ENCODE measurements at regions of chr2 and their contacts with region 1.

Region 1: GRCh38 chr2:197499594-197500526 is at the starts of genes HSPD1 and HSPE1:
- DNase-seq: peak; percentile 100
- H3K4me3 Mint-ChIP-seq: peak within 1 kb of the TSS; percentile 89
- H3K27ac Mint-ChIP-seq: peak within 1 kb of the TSS; percentile 93
- H3K4me1 Mint-ChIP-seq: peaks cover 18% of the 10 kb centered on the region
- H3K27me3 Mint-ChIP-seq: no peaks in the 10 kb centered on the region
- CTCF ChIP-seq: no peak
- total RNA-seq, gene HSPD1: 681 and 693 TPM in 2 replicates
- total RNA-seq, gene HSPE1: 80.0 and 95.2 TPM in 2 replicates

Region 2: GRCh38 chr2:197124639-197125390 is 375.0 kb before region 1 on chr2:
- CTCF ChIA-PET with region 1: no interaction called
- POLR2A ChIA-PET with region 1: no interaction called
- intact Hi-C with region 1: no loop called
- DNase-seq: no peak
- H3K4me3 Mint-ChIP-seq: no peak overlapping the region
- H3K27ac Mint-ChIP-seq: no peak overlapping the region
- H3K4me1 Mint-ChIP-seq: no peaks in the 10 kb centered on the region
- H3K27me3 Mint-ChIP-seq: no peaks in the 10 kb centered on the region
- CTCF ChIP-seq: no peak

Region 3: GRCh38 chr2:197378494-197379307 is 121.2 kb before region 1 on chr2:
- CTCF ChIA-PET with region 1: no interaction called
- POLR2A ChIA-PET with region 1: no interaction called
- intact Hi-C with region 1: no loop called
- DNase-seq: peak; percentile 74
- H3K4me3 Mint-ChIP-seq: peak overlapping the region; percentile 19
- H3K27ac Mint-ChIP-seq: no peak overlapping the region
- H3K4me1 Mint-ChIP-seq: peaks cover 16% of the 10 kb centered on the region
- H3K27me3 Mint-ChIP-seq: peaks cover 12% of the 10 kb centered on the region
- CTCF ChIP-seq: peak; percentile 70

Region 4: DNA sequence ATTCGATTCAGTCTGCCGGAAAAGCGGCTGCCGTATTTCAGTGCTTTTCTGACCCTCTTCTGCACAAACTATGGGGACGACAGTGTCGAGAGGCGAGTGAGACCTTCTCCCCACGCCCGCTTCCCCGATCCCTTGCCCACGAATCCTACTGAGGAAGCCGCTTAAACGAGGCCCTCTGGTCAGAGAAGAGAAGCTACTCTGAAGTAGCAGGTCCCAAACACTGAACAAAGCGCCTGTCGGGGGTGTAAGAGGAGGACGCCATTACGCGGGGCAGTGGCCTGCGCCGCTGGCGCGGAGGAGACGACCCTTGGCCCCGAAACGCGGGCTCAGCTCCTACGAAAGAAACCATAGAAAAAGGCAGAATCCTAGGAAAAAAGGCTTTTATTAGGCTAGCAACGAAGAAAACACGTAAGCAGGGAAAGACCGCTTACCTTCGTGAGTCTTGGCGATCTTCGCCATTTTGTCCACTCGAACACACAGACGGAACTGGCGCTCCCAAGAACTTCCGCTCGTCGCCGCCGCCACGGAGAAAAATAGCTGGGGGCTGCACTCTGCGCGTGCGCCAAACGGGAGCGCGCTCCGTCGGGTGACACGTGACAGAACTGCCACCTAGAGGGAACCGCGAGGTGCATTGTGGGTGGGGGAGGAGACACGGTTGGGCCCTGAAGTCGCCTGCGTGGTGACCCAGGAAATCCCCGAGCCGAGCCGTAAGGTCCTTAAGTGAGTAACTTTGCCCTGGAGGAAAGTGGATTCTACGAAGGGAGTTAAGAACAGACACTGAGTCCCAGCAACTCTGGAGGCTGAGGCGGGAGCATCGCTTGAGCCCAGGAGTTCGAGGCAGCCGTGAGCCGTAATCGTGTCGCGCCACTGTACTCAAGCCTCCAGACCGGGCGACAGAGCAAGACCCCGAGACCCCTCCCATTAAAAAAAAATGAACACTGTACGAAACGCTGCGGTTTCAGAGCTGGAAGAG is 65.0 kb before region 1 on chr2 and contains the start of gene SF3B1:
- CTCF ChIA-PET with region 1: interaction called, 3 read pairs
- POLR2A ChIA-PET with region 1: interaction called, 132 read pairs
- intact Hi-C with region 1: loop called (anchors 2 kb)
- DNase-seq: peak; percentile 98
- H3K4me3 Mint-ChIP-seq: peak within 1 kb of the TSS; percentile 70
- H3K27ac Mint-ChIP-seq: peak within 1 kb of the TSS; percentile 100
- H3K4me1 Mint-ChIP-seq: peaks cover 15% of the 10 kb centered on the region
- H3K27me3 Mint-ChIP-seq: no peaks in the 10 kb centered on the region
- CTCF ChIP-seq: no peak
- total RNA-seq, gene SF3B1: 179 and 182 TPM in 2 replicates

Region 5: GRCh38 chr2:197461057-197461456 is 38.8 kb before region 1 on chr2:
- CTCF ChIA-PET with region 1: no interaction called
- POLR2A ChIA-PET with region 1: interaction called, 135 read pairs
- intact Hi-C with region 1: no loop called
- DNase-seq: peak; percentile 39
- H3K4me3 Mint-ChIP-seq: no peak overlapping the region
- H3K27ac Mint-ChIP-seq: peak overlapping the region; percentile 59
- H3K4me1 Mint-ChIP-seq: peaks cover 18% of the 10 kb centered on the region
- H3K27me3 Mint-ChIP-seq: no peaks in the 10 kb centered on the region
- CTCF ChIP-seq: no peak

Region 6: DNA sequence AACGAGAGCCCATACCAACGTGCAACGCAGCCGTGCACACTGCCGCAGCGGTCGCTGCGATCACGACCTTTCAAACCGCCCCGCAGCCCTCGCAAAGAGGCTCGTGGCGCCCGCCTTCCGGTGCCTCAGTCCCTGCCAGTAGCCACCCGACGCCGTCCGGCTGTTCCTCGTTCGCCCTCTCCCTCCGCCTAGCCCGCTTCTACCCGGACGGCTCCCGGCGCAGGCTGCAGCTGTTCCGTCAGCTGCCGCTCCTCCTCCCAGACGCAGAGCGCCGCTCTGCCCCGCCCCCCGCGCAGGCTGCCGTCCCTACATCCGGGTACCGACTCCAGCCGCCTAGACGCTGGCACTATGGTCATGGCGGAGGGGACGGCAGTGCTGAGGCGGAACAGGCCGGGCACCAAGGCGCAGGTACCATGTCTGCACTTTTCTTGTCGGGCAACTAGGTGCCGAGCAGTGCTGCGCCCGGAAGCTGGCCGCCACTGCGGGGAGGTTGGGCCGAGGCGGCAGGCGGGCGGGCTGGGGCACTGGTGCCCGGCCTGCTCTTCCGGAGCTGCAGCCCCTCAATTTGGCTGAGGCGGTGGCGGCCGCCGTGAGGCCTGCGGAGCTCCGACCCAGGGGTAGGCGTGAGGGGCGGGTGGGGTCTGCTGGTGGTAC is 16.0 kb after region 1 on chr2 and contains the start of gene MOB4:
- CTCF ChIA-PET with region 1: interaction called, 9 read pairs
- POLR2A ChIA-PET with region 1: interaction called, 366 read pairs
- intact Hi-C with region 1: loop called (anchors 1 kb)
- DNase-seq: peak; percentile 92
- H3K4me3 Mint-ChIP-seq: peak within 1 kb of the TSS; percentile 96
- H3K27ac Mint-ChIP-seq: peak within 1 kb of the TSS; percentile 98
- H3K4me1 Mint-ChIP-seq: peaks cover 15% of the 10 kb centered on the region
- H3K27me3 Mint-ChIP-seq: no peaks in the 10 kb centered on the region
- CTCF ChIP-seq: no peak
- total RNA-seq, gene MOB4: 15.6 and 20.5 TPM in 2 replicates

Region 7: GRCh38 chr2:197599285-197599965 is 99.6 kb after region 1 on chr2:
- CTCF ChIA-PET with region 1: no interaction called
- POLR2A ChIA-PET with region 1: interaction called, 27 read pairs
- intact Hi-C with region 1: loop called (anchors 1 kb)
- DNase-seq: peak; percentile 87
- H3K4me3 Mint-ChIP-seq: peak overlapping the region; percentile 58
- H3K27ac Mint-ChIP-seq: peak overlapping the region; percentile 75
- H3K4me1 Mint-ChIP-seq: peaks cover 6% of the 10 kb centered on the region
- H3K27me3 Mint-ChIP-seq: no peaks in the 10 kb centered on the region
- CTCF ChIP-seq: peak; percentile 25

Region 8: GRCh38 chr2:197777823-197778407 is 278.1 kb after region 1 on chr2:
- CTCF ChIA-PET with region 1: interaction called, 4 read pairs
- POLR2A ChIA-PET with region 1: interaction called, 4 read pairs
- intact Hi-C with region 1: loop called (anchors 2 kb)
- DNase-seq: peak; percentile 65
- H3K4me3 Mint-ChIP-seq: no peak overlapping the region
- H3K27ac Mint-ChIP-seq: no peak overlapping the region
- H3K4me1 Mint-ChIP-seq: peaks cover 6% of the 10 kb centered on the region
- H3K27me3 Mint-ChIP-seq: peaks cover 11% of the 10 kb centered on the region
- CTCF ChIP-seq: peak; percentile 64

Measured in MCF 10A (cell line).